ENCODE measurements at regions of chr10 and their contacts with region 1.

Region 1: DNA sequence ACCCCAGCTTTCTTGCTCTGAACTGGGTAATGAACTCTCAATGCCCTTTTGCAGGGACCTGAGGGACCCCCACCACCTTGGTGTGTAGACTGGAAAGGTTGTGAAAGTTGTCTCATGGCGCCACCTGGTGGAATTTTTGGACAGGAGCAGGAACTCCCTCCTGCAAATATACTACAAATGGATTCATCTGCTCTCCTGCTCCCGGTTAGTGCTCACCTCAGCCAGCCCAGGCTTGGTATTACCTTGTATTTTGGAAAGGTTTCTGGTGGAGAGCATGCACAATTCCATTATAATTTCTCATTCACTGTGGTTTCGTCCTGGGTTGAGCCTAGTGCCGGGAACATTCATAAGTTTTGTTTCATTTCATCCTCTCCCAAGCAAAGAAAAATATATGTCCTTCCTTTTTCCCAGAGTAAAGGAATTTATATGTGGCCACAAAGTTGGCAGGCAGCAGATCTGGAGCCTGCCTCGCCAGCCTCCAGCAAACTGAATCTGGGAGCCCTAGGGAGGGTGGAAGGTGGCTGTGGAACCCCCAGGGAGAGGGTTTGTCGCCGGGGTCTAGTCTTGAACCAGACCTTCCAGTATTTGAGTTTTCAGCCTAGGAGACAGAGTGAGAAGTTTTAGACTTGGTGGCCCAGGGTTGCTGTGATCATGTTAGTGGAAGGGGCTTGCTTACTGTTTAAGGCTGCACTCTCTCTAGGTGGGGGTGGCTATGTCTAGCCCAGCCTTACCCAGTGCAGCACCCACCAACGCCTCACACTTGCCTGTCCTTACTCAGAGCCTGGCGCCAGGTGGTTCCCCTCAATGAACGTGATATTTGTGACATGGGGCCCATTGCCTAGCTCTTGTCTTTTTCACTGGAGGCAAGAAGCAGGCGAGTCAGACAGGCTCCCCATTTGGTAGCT is 9.5 kb downstream of the FAM241B start:
- ATAC-seq: peak; percentile 56 to 90 (median 84)
- H3K4me3 ChIP-seq: no peak overlapping the region
- H3K27ac ChIP-seq: no peak overlapping the region
- H3K4me1 ChIP-seq: peaks cover 8 to 15% of the 10 kb centered on the region in 2 donors

Region 2: GRCh38 chr10:69222157-69223027 is 417.2 kb before region 1 on chr10:
- in situ Hi-C with region 1: loop called in 1 of 9 experiments (anchors 25 kb)
- ATAC-seq: peak in 7 of 8 experiments; percentile 38 to 91 (median 46)
- H3K4me3 ChIP-seq: no peak overlapping the region
- H3K27ac ChIP-seq: no peak overlapping the region
- H3K4me1 ChIP-seq: peaks cover 4 to 11% of the 10 kb centered on the region in 2 donors

Region 3: GRCh38 chr10:69408318-69409175 is 231.0 kb before region 1 on chr10:
- in situ Hi-C with region 1: loop called in 5 of 9 experiments (anchors 10 to 25 kb)
- ATAC-seq: peak; percentile 66 to 88 (median 81)
- H3K4me3 ChIP-seq: peak overlapping the region; percentile 24 to 37 (median 31)
- H3K27ac ChIP-seq: peak overlapping the region in 1 of 2 donors; percentile 22
- H3K4me1 ChIP-seq: peaks cover 18 to 20% of the 10 kb centered on the region in 2 donors

Region 4: DNA sequence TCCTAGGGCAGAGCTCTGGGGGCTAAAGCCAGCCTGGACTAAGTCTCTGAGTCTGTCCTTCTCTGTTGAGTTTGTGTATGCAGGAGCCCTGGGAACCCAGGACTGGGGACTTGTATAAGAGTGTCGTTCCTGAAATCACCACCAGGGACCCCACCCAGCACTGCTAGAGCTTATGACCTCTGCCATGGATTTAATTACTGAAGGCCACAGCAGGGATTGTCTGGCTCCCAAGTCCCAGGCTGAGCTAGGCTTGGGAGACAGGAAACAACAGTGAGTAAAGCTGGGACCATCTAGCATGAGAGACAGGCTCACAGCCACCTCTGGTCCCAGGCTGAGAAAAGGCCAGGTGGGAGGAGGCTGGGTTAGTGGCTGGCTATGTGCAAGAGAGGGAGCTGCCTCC is 189.7 kb before region 1 on chr10:
- in situ Hi-C with region 1: loop called in 1 of 9 experiments (anchors 25 kb)
- ATAC-seq: peak in 3 of 8 experiments; percentile 21 to 28 (median 22)
- H3K4me3 ChIP-seq: no peak overlapping the region
- H3K27ac ChIP-seq: no peak overlapping the region
- H3K4me1 ChIP-seq: no peaks in the 10 kb centered on the region

Region 5: GRCh38 chr10:69515699-69516259 is 123.8 kb before region 1 on chr10:
- in situ Hi-C with region 1: loop called in 4 of 9 experiments (anchors 5 to 25 kb)
- ATAC-seq: peak; percentile 46 to 92 (median 62)
- H3K4me3 ChIP-seq: no peak overlapping the region
- H3K27ac ChIP-seq: no peak overlapping the region
- H3K4me1 ChIP-seq: no peaks in the 10 kb centered on the region

Region 6: GRCh38 chr10:69914398-69915214 is 275.1 kb after region 1 on chr10:
- in situ Hi-C with region 1: loop called in 4 of 9 experiments (anchors 25 kb)
- ATAC-seq: peak; percentile 89 to 97 (median 94)
- H3K4me3 ChIP-seq: no peak overlapping the region
- H3K27ac ChIP-seq: no peak overlapping the region
- H3K4me1 ChIP-seq: peaks cover 16 to 27% of the 10 kb centered on the region in 2 donors

Measured in motor neuron (in vitro differentiated cells).